CD4-positive, alpha-beta T cell (primary cell): ENCODE measurements at regions of chr10 and their contacts with region 1.

Region 1: DNA sequence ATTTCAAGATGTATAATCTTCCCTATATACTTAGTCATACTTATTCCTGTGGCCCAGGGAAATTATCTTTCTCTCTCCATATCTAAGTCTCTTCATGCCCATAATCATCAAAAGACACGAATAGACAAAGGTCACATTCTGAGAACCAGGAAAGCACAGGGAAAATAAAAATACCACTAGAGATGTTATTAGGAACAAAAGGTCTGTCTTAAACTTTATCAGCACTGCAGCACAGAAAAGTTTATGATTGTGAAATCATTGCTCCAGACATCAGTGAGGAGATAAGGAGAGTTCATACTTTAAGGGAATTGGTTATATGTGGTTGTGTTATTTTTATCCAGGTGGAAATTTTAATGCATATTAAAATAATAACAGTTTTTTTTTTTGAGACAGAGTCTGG is 974.6 kb upstream of the CELF2 start:
- DNase-seq: no peak
- ATAC-seq: no peak
- H3K4me3 ChIP-seq: no peak overlapping the region
- H3K4me3 Mint-ChIP-seq: no peak overlapping the region
- H3K27ac ChIP-seq: no peak overlapping the region
- H3K27ac Mint-ChIP-seq: no peak overlapping the region
- H3K4me1 ChIP-seq: no peaks in the 10 kb centered on the region
- H3K4me1 Mint-ChIP-seq: no peaks in the 10 kb centered on the region
- H3K27me3 ChIP-seq: no peaks in the 10 kb centered on the region
- H3K27me3 Mint-ChIP-seq: no peaks in the 10 kb centered on the region
- CTCF ChIP-seq: no peak

Region 2: DNA sequence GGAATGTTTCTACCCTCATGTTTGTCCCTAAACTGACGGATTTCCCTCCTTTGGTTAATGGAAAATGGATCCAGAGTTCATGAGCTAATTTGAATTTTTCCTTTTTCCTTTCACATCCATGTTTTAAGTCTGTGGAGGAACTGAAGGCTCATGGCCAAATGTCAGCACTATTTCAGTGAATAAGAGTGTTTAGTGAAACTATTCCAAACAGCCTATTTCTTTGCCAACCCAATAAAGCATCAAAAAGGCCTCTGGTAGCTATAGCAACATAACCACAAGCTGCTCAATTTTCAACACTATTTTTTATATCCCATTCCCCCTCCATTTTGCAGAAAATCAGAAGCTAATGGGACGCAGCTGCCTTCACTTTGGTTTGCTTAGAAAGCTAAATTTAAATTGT is 534.5 kb before region 1 on chr10:
- CTCF ChIA-PET with region 1: no interaction called
- POLR2A ChIA-PET with region 1: no interaction called
- intact Hi-C with region 1: no loop called
- DNase-seq: no peak
- ATAC-seq: no peak
- H3K4me3 ChIP-seq: no peak overlapping the region
- H3K4me3 Mint-ChIP-seq: no peak overlapping the region
- H3K27ac ChIP-seq: no peak overlapping the region
- H3K27ac Mint-ChIP-seq: no peak overlapping the region
- H3K4me1 ChIP-seq: no peaks in the 10 kb centered on the region
- H3K4me1 Mint-ChIP-seq: no peaks in the 10 kb centered on the region
- H3K27me3 ChIP-seq: no peaks in the 10 kb centered on the region
- H3K27me3 Mint-ChIP-seq: peaks cover 5% of the 10 kb centered on the region
- CTCF ChIP-seq: no peak

Region 3: GRCh38 chr10:10017716-10018115 is 25.4 kb before region 1 on chr10:
- CTCF ChIA-PET with region 1: no interaction called
- POLR2A ChIA-PET with region 1: no interaction called
- intact Hi-C with region 1: loop called in 1 of 2 experiments (anchors 2 kb)
- DNase-seq: no peak
- ATAC-seq: no peak
- H3K4me3 ChIP-seq: no peak overlapping the region
- H3K4me3 Mint-ChIP-seq: no peak overlapping the region
- H3K27ac ChIP-seq: no peak overlapping the region
- H3K27ac Mint-ChIP-seq: no peak overlapping the region
- H3K4me1 ChIP-seq: no peaks in the 10 kb centered on the region
- H3K4me1 Mint-ChIP-seq: no peaks in the 10 kb centered on the region
- H3K27me3 ChIP-seq: no peaks in the 10 kb centered on the region
- H3K27me3 Mint-ChIP-seq: no peaks in the 10 kb centered on the region
- CTCF ChIP-seq: no peak

Region 4: GRCh38 chr10:10068277-10068676 is 25.2 kb after region 1 on chr10:
- CTCF ChIA-PET with region 1: no interaction called
- POLR2A ChIA-PET with region 1: no interaction called
- intact Hi-C with region 1: no loop called
- DNase-seq: no peak
- ATAC-seq: no peak
- H3K4me3 ChIP-seq: no peak overlapping the region
- H3K4me3 Mint-ChIP-seq: no peak overlapping the region
- H3K27ac ChIP-seq: no peak overlapping the region
- H3K27ac Mint-ChIP-seq: no peak overlapping the region
- H3K4me1 ChIP-seq: no peaks in the 10 kb centered on the region
- H3K4me1 Mint-ChIP-seq: no peaks in the 10 kb centered on the region
- H3K27me3 ChIP-seq: no peaks in the 10 kb centered on the region
- H3K27me3 Mint-ChIP-seq: peaks cover 5% of the 10 kb centered on the region
- CTCF ChIP-seq: no peak